ENCODE measurements at regions of chr7 and their contacts with region 1.

Region 1: GRCh38 chr7:132654150-132654549 is 77.9 kb upstream of the PLXNA4 start:
- DNase-seq: peak in 1 of 2 experiments; percentile 11
- H3K4me3 ChIP-seq: no peak overlapping the region
- H3K4me3 Mint-ChIP-seq: no peak overlapping the region
- H3K27ac Mint-ChIP-seq: no peak overlapping the region
- H3K4me1 ChIP-seq: no peaks in the 10 kb centered on the region
- H3K4me1 Mint-ChIP-seq: peaks cover 11% of the 10 kb centered on the region
- H3K27me3 ChIP-seq: no peaks in the 10 kb centered on the region; the same call in 1 of the 2 replicates
- H3K27me3 Mint-ChIP-seq: peaks cover 12% of the 10 kb centered on the region
- CTCF ChIP-seq: peak; percentile 24 to 41

Region 2: GRCh38 chr7:134394046-134394445 is 1739.9 kb after region 1 on chr7:
- CTCF ChIA-PET with region 1: interaction called, 10 read pairs
- POLR2A ChIA-PET with region 1: no interaction called
- intact Hi-C with region 1: no loop called
- DNase-seq: no peak
- H3K4me3 ChIP-seq: no peak overlapping the region
- H3K4me3 Mint-ChIP-seq: no peak overlapping the region
- H3K27ac Mint-ChIP-seq: no peak overlapping the region
- H3K4me1 ChIP-seq: no peaks in the 10 kb centered on the region
- H3K4me1 Mint-ChIP-seq: no peaks in the 10 kb centered on the region
- H3K27me3 ChIP-seq: no peaks in the 10 kb centered on the region
- H3K27me3 Mint-ChIP-seq: peaks cover 14% of the 10 kb centered on the region
- CTCF ChIP-seq: no peak